Endothelial cell of umbilical vein (primary cell): ENCODE measurements at regions of chr3 and their contacts with region 1.

Region 1: DNA sequence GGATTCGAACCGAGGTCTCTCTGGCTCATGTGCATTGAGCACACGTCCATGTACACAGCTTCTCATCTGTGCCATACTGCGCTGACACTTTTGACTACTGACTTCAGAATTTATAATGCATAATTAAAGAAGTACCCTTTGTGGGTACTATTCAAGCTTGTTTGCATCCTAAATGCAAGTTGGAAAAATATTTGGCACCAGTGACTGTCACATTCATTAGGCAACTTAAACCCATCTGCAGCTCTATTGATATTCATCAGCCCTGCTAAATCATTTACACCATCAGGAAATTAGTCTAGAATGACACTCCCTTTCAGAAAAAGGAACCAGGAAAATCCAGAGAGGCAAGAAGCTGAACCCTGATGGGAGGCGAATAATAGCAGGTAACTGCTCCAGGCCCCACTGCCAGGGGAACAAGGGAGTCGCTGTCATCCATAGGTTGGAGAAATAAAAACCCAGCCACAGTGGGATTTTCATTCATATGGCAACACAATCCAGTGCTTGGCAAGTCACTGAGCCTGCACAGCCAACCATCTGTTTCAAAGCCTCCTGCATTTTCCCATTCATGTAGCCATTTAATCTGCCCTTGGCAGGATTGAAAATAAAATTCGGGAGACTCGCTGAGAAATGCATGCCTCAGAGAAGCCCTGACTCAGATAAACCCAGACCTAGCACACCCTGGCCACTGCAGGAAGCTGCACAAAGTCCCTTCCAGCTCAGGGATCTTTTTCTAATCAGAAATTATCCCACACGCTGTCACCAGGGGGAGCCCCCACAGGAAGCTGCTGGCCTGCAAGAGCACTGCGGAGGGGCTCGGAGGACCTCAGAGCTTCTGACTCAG is 103.0 kb upstream of the VEPH1 start:
- DNase-seq: peak; percentile 73
- H3K4me3 ChIP-seq: no peak overlapping the region
- H3K27ac ChIP-seq: no peak overlapping the region
- H3K4me1 ChIP-seq: no peaks in the 10 kb centered on the region
- H3K27me3 ChIP-seq: no peaks in the 10 kb centered on the region
- CTCF ChIP-seq: peak; percentile 85 to 86
- POLR2A ChIP-seq: no peak

Region 2: GRCh38 chr3:157520485-157521150 is 85.6 kb before region 1 on chr3:
- CTCF ChIA-PET with region 1: no interaction called
- POLR2A ChIA-PET with region 1: no interaction called
- dilution Hi-C with region 1: no loop called
- intact Hi-C with region 1: no loop called
- DNase-seq: no peak
- H3K4me3 ChIP-seq: no peak overlapping the region
- H3K27ac ChIP-seq: no peak overlapping the region
- H3K4me1 ChIP-seq: no peaks in the 10 kb centered on the region
- H3K27me3 ChIP-seq: no peaks in the 10 kb centered on the region
- CTCF ChIP-seq: no peak
- POLR2A ChIP-seq: no peak

Region 3: GRCh38 chr3:157572559-157573270 is 33.5 kb before region 1 on chr3:
- CTCF ChIA-PET with region 1: interaction called, 11 read pairs
- POLR2A ChIA-PET with region 1: no interaction called
- dilution Hi-C with region 1: no loop called
- intact Hi-C with region 1: no loop called
- DNase-seq: peak; percentile 83
- H3K4me3 ChIP-seq: no peak overlapping the region
- H3K27ac ChIP-seq: no peak overlapping the region
- H3K4me1 ChIP-seq: no peaks in the 10 kb centered on the region
- H3K27me3 ChIP-seq: no peaks in the 10 kb centered on the region
- CTCF ChIP-seq: peak; percentile 71 to 75
- POLR2A ChIP-seq: no peak

Region 4: DNA sequence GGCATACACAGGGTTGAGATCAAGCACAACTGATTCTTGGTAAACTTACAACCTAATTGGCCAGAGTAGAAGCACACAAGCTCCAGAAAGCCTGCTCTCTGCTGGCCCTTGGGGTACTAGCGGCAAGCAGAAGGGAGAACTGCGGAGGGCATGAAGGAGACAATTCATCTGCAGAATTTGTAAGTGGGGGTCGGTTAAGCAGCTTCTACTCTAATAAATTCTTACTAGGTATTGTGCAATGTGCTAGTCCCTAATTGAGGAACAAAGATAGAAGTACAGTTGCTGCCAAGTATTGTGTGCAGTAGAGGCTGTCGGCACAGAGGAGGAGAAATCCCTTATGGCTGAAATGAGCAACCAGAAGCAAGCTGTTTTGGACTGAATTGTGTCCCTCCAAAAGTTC is 11.8 kb before region 1 on chr3:
- CTCF ChIA-PET with region 1: interaction called, 11 read pairs
- POLR2A ChIA-PET with region 1: no interaction called
- dilution Hi-C with region 1: no loop called
- intact Hi-C with region 1: no loop called
- DNase-seq: no peak
- H3K4me3 ChIP-seq: no peak overlapping the region
- H3K27ac ChIP-seq: no peak overlapping the region
- H3K4me1 ChIP-seq: no peaks in the 10 kb centered on the region
- H3K27me3 ChIP-seq: peaks cover 9 to 21% of the 10 kb centered on the region in 2 experiments
- CTCF ChIP-seq: no peak
- POLR2A ChIP-seq: no peak

Region 5: GRCh38 chr3:157624801-157625200 is 18.6 kb after region 1 on chr3:
- CTCF ChIA-PET with region 1: interaction called, 19 read pairs
- POLR2A ChIA-PET with region 1: no interaction called
- dilution Hi-C with region 1: no loop called
- intact Hi-C with region 1: no loop called
- DNase-seq: no peak
- H3K4me3 ChIP-seq: no peak overlapping the region
- H3K27ac ChIP-seq: no peak overlapping the region
- H3K4me1 ChIP-seq: no peaks in the 10 kb centered on the region
- H3K27me3 ChIP-seq: peaks cover 12 to 52% of the 10 kb centered on the region in 2 experiments
- CTCF ChIP-seq: no peak
- POLR2A ChIP-seq: no peak

Region 6: DNA sequence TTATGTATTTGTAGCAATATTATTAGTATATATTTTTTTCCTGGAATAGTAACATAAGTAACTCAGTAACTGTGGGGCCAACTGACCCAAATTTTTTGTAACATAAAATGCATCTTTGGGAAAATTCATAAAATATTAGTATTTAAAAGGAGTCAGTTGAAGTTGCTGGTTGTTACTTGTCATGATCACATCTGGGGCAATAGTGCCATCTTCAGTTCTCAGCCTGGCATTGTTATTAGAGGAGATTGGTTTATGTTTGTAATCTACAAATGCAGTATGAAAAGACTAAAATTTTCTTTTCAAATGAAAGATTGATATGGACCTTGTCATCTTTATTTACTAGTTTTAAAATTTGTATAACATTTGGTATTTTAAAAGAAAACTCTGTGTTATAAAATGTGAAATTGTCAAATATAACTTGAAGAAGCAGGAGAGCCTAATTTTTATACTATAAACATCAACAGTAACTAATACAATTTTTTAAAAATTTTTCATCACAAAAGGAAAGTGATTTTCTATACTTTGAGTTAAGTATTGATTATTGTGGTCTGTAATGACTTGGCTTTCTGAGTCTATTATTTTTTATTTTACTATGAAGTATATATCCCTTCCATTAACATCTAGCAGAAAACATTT is 926.0 kb after region 1 on chr3:
- CTCF ChIA-PET with region 1: interaction called, 71 read pairs
- POLR2A ChIA-PET with region 1: no interaction called
- dilution Hi-C with region 1: no loop called
- intact Hi-C with region 1: loop called (anchors 2 kb)
- DNase-seq: peak; percentile 72
- H3K4me3 ChIP-seq: no peak overlapping the region
- H3K27ac ChIP-seq: no peak overlapping the region
- H3K4me1 ChIP-seq: no peaks in the 10 kb centered on the region
- H3K27me3 ChIP-seq: no peaks in the 10 kb centered on the region
- CTCF ChIP-seq: peak; percentile 36 to 46
- POLR2A ChIP-seq: no peak